Activated CD4-positive, alpha-beta memory T cell treated with anti-CD3 and anti-CD28 coated beads for 36 hours (primary cell): ENCODE measurements at regions of chr9 and their contacts with region 1.

Region 1: GRCh38 chr9:112750111-112750767 is at the start of gene SNX30:
- DNase-seq: peak; percentile 87
- H3K4me3 Mint-ChIP-seq: peak within 1 kb of the TSS; percentile 76
- H3K27ac Mint-ChIP-seq: peak within 1 kb of the TSS; percentile 78
- H3K4me1 Mint-ChIP-seq: peaks cover 56% of the 10 kb centered on the region
- H3K27me3 Mint-ChIP-seq: no peaks in the 10 kb centered on the region
- total RNA-seq, gene SNX30: 4.4 to 4.8 TPM

Region 2: GRCh38 chr9:111631071-111631971 is 1118.9 kb before region 1 on chr9 and contains the start of gene DNAJC25:
- CTCF ChIA-PET with region 1: no interaction called
- POLR2A ChIA-PET with region 1: no interaction called
- intact Hi-C with region 1: loop called (anchors 2 kb)
- DNase-seq: peak; percentile 98
- H3K4me3 Mint-ChIP-seq: peak within 1 kb of the TSS; percentile 90
- H3K27ac Mint-ChIP-seq: peak within 1 kb of the TSS; percentile 74
- H3K4me1 Mint-ChIP-seq: peaks cover 43% of the 10 kb centered on the region
- H3K27me3 Mint-ChIP-seq: no peaks in the 10 kb centered on the region
- total RNA-seq, gene DNAJC25: 4.2 to 4.5 TPM

Region 3: GRCh38 chr9:112379177-112380101 is 370.8 kb before region 1 on chr9:
- CTCF ChIA-PET with region 1: no interaction called
- POLR2A ChIA-PET with region 1: no interaction called
- intact Hi-C with region 1: loop called (anchors 1 kb)
- DNase-seq: peak; percentile 99
- H3K4me3 Mint-ChIP-seq: peak overlapping the region; percentile 97
- H3K27ac Mint-ChIP-seq: peak overlapping the region; percentile 98
- H3K4me1 Mint-ChIP-seq: peaks cover 40% of the 10 kb centered on the region
- H3K27me3 Mint-ChIP-seq: no peaks in the 10 kb centered on the region

Region 4: GRCh38 chr9:112717661-112718341 is 32.4 kb before region 1 on chr9 and contains the start of gene INIP:
- CTCF ChIA-PET with region 1: interaction called, 6 read pairs
- POLR2A ChIA-PET with region 1: interaction called, 9 read pairs
- intact Hi-C with region 1: loop called (anchors 1 kb)
- DNase-seq: peak; percentile 99
- H3K4me3 Mint-ChIP-seq: peak within 1 kb of the TSS; percentile 90
- H3K27ac Mint-ChIP-seq: peak within 1 kb of the TSS; percentile 93
- H3K4me1 Mint-ChIP-seq: peaks cover 35% of the 10 kb centered on the region
- H3K27me3 Mint-ChIP-seq: no peaks in the 10 kb centered on the region
- total RNA-seq, gene INIP: 35.1 to 37.8 TPM

Region 5: DNA sequence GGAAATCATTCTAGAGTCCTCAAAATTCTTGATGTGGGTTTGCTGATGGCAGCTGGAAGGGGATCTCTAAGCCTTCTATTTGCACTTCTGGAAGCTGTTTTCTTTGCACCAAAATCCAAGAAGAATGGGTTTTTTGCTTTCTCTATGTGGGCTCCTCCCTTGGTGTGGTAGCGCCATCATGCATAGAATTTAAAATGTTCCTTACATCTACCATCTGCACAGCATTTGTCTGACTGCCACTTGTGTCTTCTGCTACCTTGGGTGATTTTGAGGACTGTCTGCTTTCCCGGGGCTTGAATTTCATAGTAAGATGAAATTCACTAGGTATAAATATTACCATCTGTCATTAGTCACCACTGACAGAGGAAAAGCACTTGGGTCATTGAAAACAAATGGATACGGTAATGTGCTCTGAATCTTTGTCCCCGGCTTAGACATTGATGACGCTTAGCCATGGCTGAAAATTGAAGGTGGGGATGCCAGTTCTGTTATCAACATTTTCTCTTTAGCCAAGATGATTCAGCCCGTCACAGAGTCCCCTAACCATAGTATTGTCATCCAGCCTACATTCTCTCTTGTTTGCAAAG is 30.3 kb after region 1 on chr9:
- CTCF ChIA-PET with region 1: no interaction called
- POLR2A ChIA-PET with region 1: no interaction called
- intact Hi-C with region 1: no loop called
- DNase-seq: no peak
- H3K4me3 Mint-ChIP-seq: no peak overlapping the region
- H3K27ac Mint-ChIP-seq: no peak overlapping the region
- H3K4me1 Mint-ChIP-seq: peaks cover 12% of the 10 kb centered on the region
- H3K27me3 Mint-ChIP-seq: no peaks in the 10 kb centered on the region

Region 6: DNA sequence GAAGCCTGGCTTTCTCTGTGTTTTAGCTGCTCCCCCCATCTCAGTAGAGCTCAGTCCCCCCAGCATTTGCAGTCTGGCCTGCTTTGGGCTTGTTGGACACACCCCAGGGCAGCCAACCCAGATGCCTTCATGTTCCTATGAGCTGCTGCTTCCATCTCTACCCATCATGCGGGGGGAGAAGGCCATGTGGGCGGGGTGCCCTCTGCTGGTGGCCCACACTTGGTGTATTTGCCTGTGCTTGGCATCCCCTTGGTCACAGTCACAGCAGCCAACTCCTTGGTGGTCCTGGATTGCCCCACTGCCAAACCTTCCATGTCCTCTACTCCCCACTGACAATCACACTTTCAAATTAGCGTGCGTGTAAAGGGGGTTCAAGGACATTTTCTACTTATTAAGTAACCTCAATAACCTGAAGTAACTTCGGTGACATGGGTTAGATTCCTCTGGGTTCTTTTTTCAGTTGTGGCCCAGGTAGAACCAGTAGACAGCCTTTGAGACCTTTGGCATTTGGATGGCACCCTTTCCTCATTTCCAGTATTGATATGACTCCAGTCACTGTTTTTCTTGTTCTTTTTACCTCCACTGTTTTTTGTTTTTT is 43.1 kb after region 1 on chr9:
- CTCF ChIA-PET with region 1: interaction called, 10 read pairs
- POLR2A ChIA-PET with region 1: no interaction called
- intact Hi-C with region 1: loop called (anchors 5 kb)
- DNase-seq: peak; percentile 90
- H3K4me3 Mint-ChIP-seq: no peak overlapping the region
- H3K27ac Mint-ChIP-seq: no peak overlapping the region
- H3K4me1 Mint-ChIP-seq: peaks cover 9% of the 10 kb centered on the region
- H3K27me3 Mint-ChIP-seq: no peaks in the 10 kb centered on the region

Region 7: GRCh38 chr9:113221003-113221799 is 471.0 kb after region 1 on chr9 and contains the starts of genes FKBP15 and SLC31A1:
- CTCF ChIA-PET with region 1: no interaction called
- POLR2A ChIA-PET with region 1: no interaction called
- intact Hi-C with region 1: loop called (anchors 2 kb)
- DNase-seq: peak; percentile 98
- H3K4me3 Mint-ChIP-seq: peak within 1 kb of the TSS; percentile 94
- H3K27ac Mint-ChIP-seq: peak within 1 kb of the TSS; percentile 92
- H3K4me1 Mint-ChIP-seq: peaks cover 34% of the 10 kb centered on the region
- H3K27me3 Mint-ChIP-seq: no peaks in the 10 kb centered on the region
- total RNA-seq, gene FKBP15: 25.8 to 27.7 TPM
- total RNA-seq, gene SLC31A1: 12.1 to 12.5 TPM